Mammary epithelial cell (primary cell): ENCODE measurements at regions of chr15 and their contacts with region 1.

Region 1: GRCh38 chr15:48584812-48585563 is 60.5 kb downstream of the FBN1 start:
- DNase-seq: no peak
- H3K4me3 ChIP-seq: no peak overlapping the region
- H3K27ac ChIP-seq: no peak overlapping the region
- H3K4me1 ChIP-seq: no peaks in the 10 kb centered on the region
- H3K27me3 ChIP-seq: no peaks in the 10 kb centered on the region
- CTCF ChIP-seq: no peak

Region 2: GRCh38 chr15:48653913-48654670 is 69.1 kb after region 1 on chr15:
- CTCF ChIA-PET with region 1: no interaction called
- dilution Hi-C with region 1: loop called (anchors 5 kb)
- in situ Hi-C with region 1: no loop called
- intact Hi-C with region 1: no loop called
- DNase-seq: no peak
- H3K4me3 ChIP-seq: no peak overlapping the region
- H3K27ac ChIP-seq: no peak overlapping the region
- H3K4me1 ChIP-seq: no peaks in the 10 kb centered on the region
- H3K27me3 ChIP-seq: no peaks in the 10 kb centered on the region
- CTCF ChIP-seq: no peak